K562 (cell line): ENCODE measurements at regions of chr7 and their contacts with region 1.

Region 1: GRCh38 chr7:158495786-158496185 is 91.8 kb downstream of the PTPRN2 start:
- DNase-seq: peak in 1 of 4 experiments; percentile 20
- ATAC-seq: peak; percentile 56
- H3K4me3 ChIP-seq: no peak overlapping the region
- H3K27ac ChIP-seq: no peak overlapping the region
- H3K4me1 ChIP-seq: peaks cover 0 to 3% of the 10 kb centered on the region in 2 experiments; a peak in 2 of 5 replicates
- H3K27me3 ChIP-seq: peaks cover 21 to 36% of the 10 kb centered on the region in 2 experiments
- CTCF ChIP-seq: peak; percentile 24 to 33 (median 30); a peak in 4 of 6 replicates
- EP300 ChIP-seq: no peak
- POLR2A ChIP-seq: no peak
- RAD21 ChIP-seq: peak in 1 of 2 experiments; percentile 50; a peak in 2 of 4 replicates

Region 2: DNA sequence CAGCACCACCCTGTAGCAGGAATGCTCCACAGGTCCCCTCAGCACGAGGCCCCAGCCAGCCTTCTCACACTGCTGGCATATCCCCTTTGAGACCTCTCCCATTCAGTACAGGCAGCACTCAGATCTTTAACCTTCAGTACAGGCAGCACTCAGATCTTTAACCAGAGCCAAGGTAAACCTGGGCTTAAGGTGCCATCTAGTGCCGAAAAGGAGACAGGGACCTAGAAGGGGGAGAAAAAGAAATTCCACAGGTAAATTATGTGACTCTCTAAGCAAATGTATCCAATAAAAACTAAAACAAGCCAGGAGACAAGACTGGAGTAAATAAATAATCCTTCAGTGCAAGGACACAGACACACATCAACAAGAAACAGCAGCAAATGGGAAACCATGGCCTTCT is 266.8 kb before region 1 on chr7:
- CTCF ChIA-PET with region 1: no interaction called
- POLR2A ChIA-PET with region 1: no interaction called
- in situ Hi-C with region 1: no loop called
- intact Hi-C with region 1: no loop called
- DNase-seq: peak in 1 of 4 experiments; percentile 10
- ATAC-seq: peak; percentile 45; the same call in 1 of the 3 replicates
- H3K4me3 ChIP-seq: no peak overlapping the region
- H3K27ac ChIP-seq: no peak overlapping the region
- H3K4me1 ChIP-seq: no peaks in the 10 kb centered on the region
- H3K27me3 ChIP-seq: no peaks in the 10 kb centered on the region; a peak in 1 of 5 replicates
- CTCF ChIP-seq: peak; percentile 19 to 48 (median 31); a peak in 3 of 6 replicates
- EP300 ChIP-seq: no peak
- POLR2A ChIP-seq: no peak
- RAD21 ChIP-seq: peak in 1 of 2 experiments; percentile 49; a peak in 2 of 4 replicates

Region 3: DNA sequence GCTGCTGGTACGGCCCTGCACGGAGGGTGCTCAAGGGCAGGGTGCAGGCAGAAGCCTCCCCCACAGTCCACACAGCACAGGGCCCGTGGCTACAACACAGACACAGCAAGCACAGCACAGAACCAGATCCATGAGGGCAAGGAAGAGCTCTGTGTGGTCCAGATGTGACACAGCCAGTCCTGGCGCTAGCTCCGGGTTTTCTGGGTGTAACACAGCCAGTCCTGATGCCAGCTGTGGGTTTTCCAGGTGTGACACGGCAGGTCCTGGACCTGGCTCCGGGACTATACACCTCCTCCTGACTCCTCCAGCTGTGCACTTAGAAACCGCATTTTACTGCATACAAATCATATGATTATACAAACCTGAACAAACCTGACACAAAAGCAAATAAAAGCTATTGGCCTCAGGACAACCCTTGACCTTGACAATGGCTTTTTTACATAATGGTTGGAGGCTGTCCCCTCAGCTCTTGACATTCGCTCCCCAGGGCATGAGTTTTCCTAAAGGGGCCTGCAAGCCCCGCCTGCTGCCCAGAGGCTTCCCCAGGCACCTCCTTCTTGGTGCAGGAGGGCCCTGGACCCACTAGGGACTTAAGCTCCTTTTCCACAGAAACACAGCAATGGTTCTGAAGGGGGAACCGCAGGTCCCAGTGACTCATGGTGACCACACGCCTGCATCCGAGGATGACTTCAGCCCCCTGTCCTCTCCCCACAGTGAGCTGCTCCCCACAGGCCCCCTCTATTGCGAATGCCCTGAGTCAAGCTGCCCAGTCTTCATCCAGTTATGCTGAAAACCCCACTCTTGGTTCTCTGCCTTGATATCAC is 117.8 kb before region 1 on chr7:
- CTCF ChIA-PET with region 1: no interaction called
- POLR2A ChIA-PET with region 1: no interaction called
- in situ Hi-C with region 1: no loop called
- intact Hi-C with region 1: no loop called
- DNase-seq: no peak
- ATAC-seq: no peak
- H3K4me3 ChIP-seq: no peak overlapping the region
- H3K27ac ChIP-seq: no peak overlapping the region
- H3K4me1 ChIP-seq: no peaks in the 10 kb centered on the region
- H3K27me3 ChIP-seq: peaks cover 6 to 24% of the 10 kb centered on the region in 2 experiments; a peak in 3 of 5 replicates
- CTCF ChIP-seq: no peak
- EP300 ChIP-seq: no peak
- POLR2A ChIP-seq: no peak
- RAD21 ChIP-seq: no peak

Region 4: DNA sequence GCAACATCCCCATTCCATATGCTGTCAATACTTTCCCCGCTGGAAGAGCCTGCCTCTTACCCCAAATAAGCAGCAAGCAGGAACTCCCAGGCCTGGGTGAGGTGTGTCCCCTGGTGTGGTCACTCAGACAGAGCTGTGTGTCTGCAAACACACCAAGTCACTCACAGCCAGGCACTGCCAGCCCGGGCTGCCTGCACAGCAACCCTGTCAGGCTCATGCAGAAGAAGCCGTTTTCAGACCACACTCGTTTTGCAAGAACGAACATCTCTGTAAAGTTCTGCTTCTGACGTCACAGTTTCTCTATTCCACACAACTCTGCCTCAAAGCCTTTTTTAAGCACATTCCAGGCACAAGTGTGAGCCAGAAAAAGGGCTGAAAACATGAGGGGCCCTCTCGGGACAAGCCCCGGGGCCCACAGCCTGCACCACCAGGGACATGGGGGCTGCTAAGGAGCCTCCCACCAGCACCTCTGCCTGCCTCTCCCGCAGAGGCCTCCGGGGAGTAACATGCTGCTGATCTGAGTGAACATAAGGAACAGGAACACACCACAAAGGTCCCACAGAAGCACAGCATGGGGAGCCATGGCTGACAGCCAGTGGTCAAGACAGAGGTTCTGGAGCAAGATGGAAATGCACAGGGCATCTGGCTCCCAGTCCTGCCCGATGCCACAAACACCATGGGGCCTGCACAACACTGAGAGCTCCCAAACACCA is 80.4 kb after region 1 on chr7:
- CTCF ChIA-PET with region 1: no interaction called
- POLR2A ChIA-PET with region 1: no interaction called
- in situ Hi-C with region 1: loop called (anchors 5 kb)
- intact Hi-C with region 1: no loop called
- DNase-seq: no peak
- ATAC-seq: no peak
- H3K4me3 ChIP-seq: no peak overlapping the region
- H3K27ac ChIP-seq: no peak overlapping the region
- H3K4me1 ChIP-seq: no peaks in the 10 kb centered on the region
- H3K27me3 ChIP-seq: peaks cover 0 to 18% of the 10 kb centered on the region in 2 experiments; a peak in 3 of 5 replicates
- CTCF ChIP-seq: no peak
- EP300 ChIP-seq: no peak
- POLR2A ChIP-seq: no peak
- RAD21 ChIP-seq: no peak

Region 5: GRCh38 chr7:158646766-158647447 is 151.1 kb after region 1 on chr7:
- CTCF ChIA-PET with region 1: interaction called, 3 read pairs
- POLR2A ChIA-PET with region 1: no interaction called
- in situ Hi-C with region 1: no loop called
- intact Hi-C with region 1: loop called (anchors 10 kb)
- DNase-seq: peak in 3 of 4 experiments; percentile 44 to 57 (median 45)
- ATAC-seq: peak; percentile 82
- H3K4me3 ChIP-seq: no peak overlapping the region
- H3K27ac ChIP-seq: no peak overlapping the region
- H3K4me1 ChIP-seq: no peaks in the 10 kb centered on the region
- H3K27me3 ChIP-seq: no peaks in the 10 kb centered on the region
- CTCF ChIP-seq: peak; percentile 62 to 83 (median 63)
- EP300 ChIP-seq: no peak
- POLR2A ChIP-seq: no peak
- RAD21 ChIP-seq: peak; percentile 25 to 41; a peak in 3 of 4 replicates